ENCODE measurements at regions of chr15 and their contacts with region 1.

Region 1: DNA sequence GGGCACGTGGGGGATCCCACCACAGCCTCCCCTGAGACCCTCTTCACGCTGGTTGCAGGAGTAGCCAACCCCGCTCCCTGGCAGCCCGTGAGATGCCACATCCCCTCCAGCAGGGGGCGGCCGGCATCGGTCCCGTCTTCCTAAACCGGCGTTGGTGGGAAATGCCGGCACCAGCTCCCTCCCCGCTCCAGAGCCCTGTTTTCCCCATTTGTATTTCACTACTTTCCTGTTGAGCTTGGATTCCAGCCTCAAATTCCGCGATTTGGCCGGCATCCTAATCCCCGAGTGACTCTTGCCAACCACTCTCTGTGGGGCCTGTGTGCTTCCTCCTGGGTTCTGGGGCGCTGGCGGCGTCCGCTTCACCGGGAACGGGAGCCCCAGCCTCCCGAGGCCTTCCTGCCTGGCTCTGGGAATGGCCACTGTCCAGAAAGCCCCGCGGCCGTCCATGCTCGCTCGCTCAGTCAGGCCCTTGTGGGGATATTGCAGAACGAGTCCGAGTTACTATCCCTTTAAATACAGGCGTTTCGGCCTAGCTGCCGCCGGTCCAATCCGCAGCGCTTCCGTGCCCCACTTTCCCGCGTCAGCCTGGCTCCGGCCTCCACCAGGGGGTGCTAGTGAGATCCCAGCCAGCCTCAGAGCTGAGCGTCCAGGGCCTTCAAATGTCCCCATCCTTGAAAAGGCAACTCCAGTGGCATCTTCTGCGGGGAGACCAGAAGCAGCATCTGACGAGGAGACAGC is 8.1 kb upstream of the ADAMTS17 start:
- DNase-seq: peak; percentile 98
- H3K4me3 ChIP-seq: peak overlapping the region; percentile 69 to 81 (median 74)
- H3K27ac ChIP-seq: peak overlapping the region; percentile 94 to 99 (median 98)
- H3K4me1 ChIP-seq: peaks cover 6 to 16% (median 15%) of the 10 kb centered on the region in 4 donors
- H3K27me3 ChIP-seq: no peaks in the 10 kb centered on the region
- CTCF ChIP-seq: peak; percentile 74 to 92 (median 80)
- EP300 ChIP-seq: no peak
- POLR2A ChIP-seq: peak; percentile 15

Region 2: DNA sequence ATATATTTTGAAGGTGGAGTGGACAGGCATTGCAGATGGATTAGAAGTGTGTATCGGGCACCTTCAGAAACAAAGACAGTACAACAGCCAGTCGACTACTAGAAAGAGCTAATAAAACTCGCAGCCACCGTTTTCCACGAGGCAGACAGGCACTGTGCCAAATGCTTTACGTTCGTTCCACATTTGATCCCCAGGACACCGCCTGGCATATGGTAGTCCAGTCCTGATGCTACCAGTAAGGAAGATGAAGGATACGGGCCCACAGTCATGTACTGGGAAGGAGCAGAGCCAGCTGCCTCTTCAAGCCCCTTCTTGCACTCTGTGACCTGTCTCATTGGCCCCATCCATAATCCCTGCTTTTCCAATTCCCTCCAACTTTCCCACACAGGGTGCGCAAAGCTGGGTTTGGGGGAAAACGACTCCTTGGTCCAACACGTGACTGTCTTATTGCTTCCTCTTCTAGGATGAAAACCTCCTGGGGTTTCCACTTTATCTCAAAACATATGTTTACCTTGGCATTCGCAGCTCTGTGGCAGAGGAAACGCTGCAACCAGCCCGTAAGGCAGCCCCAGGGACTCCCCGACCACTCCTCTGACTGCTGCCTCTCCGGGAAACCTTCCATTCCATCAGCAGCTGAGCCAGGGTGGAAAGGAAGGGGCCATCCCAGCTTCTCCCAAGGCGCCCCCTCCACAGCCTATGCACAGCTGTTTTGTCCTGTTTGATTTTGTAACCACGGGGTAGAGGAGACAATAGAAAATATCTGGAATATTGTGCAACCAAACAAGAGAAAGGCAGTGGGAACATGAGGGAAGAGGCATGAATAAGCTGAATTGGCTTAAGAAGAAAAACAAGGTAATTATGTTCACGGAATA is 115.5 kb before region 1 on chr15:
- intact Hi-C with region 1: no loop called
- DNase-seq: no peak
- H3K4me3 ChIP-seq: no peak overlapping the region
- H3K27ac ChIP-seq: no peak overlapping the region
- H3K4me1 ChIP-seq: peaks cover 0 to 10% (median 8%) of the 10 kb centered on the region in 4 donors
- H3K27me3 ChIP-seq: no peaks in the 10 kb centered on the region
- CTCF ChIP-seq: no peak
- EP300 ChIP-seq: no peak
- POLR2A ChIP-seq: no peak

Region 3: GRCh38 chr15:100284701-100285100 is 65.2 kb before region 1 on chr15:
- intact Hi-C with region 1: no loop called
- DNase-seq: peak; percentile 94
- H3K4me3 ChIP-seq: no peak overlapping the region
- H3K27ac ChIP-seq: peak overlapping the region; percentile 10 to 56 (median 32)
- H3K4me1 ChIP-seq: peaks cover 0 to 30% (median 25%) of the 10 kb centered on the region in 4 donors
- H3K27me3 ChIP-seq: no peaks in the 10 kb centered on the region
- CTCF ChIP-seq: no peak
- EP300 ChIP-seq: no peak
- POLR2A ChIP-seq: no peak

Region 4: DNA sequence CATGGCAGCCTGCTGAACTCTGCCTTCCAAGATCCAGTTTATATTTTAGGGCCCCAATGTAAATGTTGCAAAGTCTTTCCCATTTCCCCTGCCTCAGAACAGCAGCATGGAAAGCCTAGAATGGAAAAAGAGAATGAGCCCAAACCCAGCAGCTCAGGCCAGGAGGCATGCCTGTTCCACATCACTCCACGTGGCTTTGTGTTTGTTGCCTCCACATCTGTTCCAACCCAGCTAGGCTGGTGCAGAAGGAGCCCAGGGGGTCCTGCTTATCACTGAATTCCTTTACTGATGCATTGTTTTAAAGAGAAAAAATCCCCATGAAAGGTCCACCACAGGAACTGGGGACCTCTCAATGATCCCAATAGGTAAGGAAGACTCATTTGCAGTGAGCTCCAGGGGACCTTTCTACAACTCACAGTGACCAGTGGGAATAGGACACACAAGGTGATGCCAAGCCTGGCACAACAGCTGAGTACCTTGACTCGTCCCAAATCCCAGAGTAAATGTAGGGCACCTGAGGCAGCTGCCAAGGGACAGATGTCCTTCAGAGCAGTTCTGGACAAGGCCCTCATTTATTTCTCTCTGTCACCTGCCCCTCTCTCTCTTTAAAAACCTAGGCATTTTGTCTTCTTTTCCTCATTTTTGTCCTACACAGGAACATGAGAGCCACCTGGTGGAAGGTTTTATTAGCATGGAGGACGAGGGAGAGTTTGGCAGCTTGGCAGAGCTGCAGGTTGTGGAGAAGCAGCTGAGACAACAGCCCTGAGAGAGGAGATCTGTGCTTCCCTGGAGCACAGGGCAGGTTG is 33.6 kb after region 1 on chr15:
- intact Hi-C with region 1: loop called (anchors 5 kb)
- DNase-seq: no peak
- H3K4me3 ChIP-seq: no peak overlapping the region
- H3K27ac ChIP-seq: no peak overlapping the region
- H3K4me1 ChIP-seq: no peaks in the 10 kb centered on the region
- H3K27me3 ChIP-seq: no peaks in the 10 kb centered on the region
- CTCF ChIP-seq: peak; percentile 46 to 58 (median 47)
- EP300 ChIP-seq: no peak
- POLR2A ChIP-seq: no peak

Region 5: DNA sequence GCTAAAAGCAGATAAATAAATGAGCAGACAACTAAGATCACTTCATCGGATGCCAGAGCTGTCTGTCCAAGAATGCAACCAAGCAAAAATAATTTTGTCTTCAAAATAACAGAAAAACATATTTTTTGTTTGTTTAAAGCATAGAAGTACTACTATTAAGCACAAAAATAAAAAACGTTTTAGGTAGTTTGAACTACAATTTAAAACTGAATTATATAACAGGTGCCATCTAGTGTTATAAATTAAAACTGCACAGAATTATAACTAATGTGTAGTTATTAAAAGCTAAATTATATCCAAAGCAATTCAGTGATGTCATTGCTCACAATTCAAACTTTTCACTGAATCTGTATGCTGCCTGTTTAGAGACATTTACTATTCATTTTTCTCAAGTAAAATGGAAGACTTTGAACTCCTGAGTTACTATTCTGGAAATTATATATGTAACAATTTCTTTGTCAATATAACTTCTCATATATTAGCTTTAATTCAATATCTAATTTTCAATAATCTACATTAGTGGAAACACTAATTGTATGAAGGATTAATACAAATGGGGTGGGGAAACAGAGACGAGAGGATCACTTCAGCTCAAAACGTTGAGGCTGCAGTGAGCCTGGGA is 222.6 kb after region 1 on chr15:
- intact Hi-C with region 1: loop called (anchors 2 kb)
- DNase-seq: no peak
- H3K4me3 ChIP-seq: no peak overlapping the region
- H3K27ac ChIP-seq: no peak overlapping the region
- H3K4me1 ChIP-seq: peaks cover 0 to 4% (median 0%) of the 10 kb centered on the region in 4 donors
- H3K27me3 ChIP-seq: no peaks in the 10 kb centered on the region
- CTCF ChIP-seq: peak; percentile 49 to 63 (median 62)
- EP300 ChIP-seq: no peak
- POLR2A ChIP-seq: no peak

Region 6: GRCh38 chr15:100602064-100602822 is 252.4 kb after region 1 on chr15 and contains the starts of genes ASB7 and LINS1:
- intact Hi-C with region 1: loop called (anchors 5 kb)
- DNase-seq: peak; percentile 100
- H3K4me3 ChIP-seq: peak within 1 kb of the TSS; percentile 71 to 94 (median 92)
- H3K27ac ChIP-seq: peak within 1 kb of the TSS; percentile 86 to 90 (median 88)
- H3K4me1 ChIP-seq: peaks cover 23 to 39% (median 38%) of the 10 kb centered on the region in 4 donors
- H3K27me3 ChIP-seq: no peaks in the 10 kb centered on the region
- CTCF ChIP-seq: peak in 1 of 3 experiments; percentile 28
- EP300 ChIP-seq: no peak
- POLR2A ChIP-seq: no peak
- total RNA-seq, gene ASB7: 12.8 to 13.8 (median 13.4) TPM
- total RNA-seq, gene LINS1: 11.7 to 33.0 (median 17.6) TPM

Measured in esophagus muscularis mucosa (tissue), 4 donors.